ENCODE measurements at regions of chr15 and their contacts with region 1.

Region 1: DNA sequence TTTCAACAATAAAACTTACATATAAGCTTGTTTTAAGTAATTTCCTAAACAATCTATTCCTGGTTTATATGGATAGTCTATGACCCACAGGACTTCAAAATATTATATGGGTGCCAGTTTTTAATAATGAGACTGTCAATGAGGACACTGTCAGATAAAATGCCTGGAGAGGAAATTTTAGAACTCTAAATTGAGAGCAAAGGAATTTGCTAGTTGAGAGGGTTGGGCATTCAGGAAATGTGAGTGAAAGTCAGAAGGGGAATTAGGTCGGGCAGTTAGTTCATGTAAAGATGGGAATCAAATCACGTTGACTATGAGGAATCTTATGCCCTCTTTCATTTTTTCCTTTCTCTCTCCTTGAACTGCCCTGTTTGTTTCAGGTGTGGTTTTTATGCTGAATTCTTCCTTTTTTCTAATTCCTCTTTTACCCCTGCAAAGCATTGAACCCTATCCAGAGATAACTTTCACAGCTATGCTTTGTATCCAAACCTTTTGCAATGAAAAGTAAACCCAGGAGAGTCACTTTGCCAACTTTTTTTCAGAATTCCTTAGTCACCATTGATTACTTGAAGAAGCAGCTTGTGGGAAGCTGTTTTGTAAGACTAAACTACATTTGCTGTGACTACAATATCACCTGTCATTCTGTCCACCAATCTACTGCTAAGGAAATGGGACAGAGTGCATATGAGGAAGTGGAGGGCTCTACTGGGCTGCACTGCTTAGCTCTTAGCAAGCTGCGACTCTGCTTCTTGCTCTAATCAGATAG is 27.8 kb downstream of the CHP1 start:
- DNase-seq: no peak
- ATAC-seq: no peak
- H3K4me3 Mint-ChIP-seq: no peak overlapping the region
- H3K27ac Mint-ChIP-seq: no peak overlapping the region
- H3K4me1 Mint-ChIP-seq: no peaks in the 10 kb centered on the region
- H3K27me3 Mint-ChIP-seq: no peaks in the 10 kb centered on the region

Region 2: DNA sequence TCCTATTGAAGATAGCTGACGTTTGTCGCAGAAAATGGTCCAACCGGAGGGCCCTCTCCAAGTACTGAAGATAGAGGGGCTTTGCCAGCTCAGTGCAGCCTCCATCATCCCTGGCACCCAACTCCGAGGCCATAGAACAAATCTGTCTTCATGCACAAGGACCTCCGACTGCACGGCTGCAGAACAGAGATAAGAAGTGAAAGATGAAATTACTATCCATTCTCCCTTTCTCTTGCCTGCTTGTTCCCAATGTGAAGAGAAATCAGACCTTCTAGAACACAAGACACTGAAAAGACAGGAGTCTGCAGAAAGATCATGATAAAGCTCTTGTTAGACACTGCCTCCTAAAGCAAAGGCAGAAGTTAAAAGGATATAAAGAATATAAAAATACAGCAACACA is 162.7 kb before region 1 on chr15:
- CTCF ChIA-PET with region 1: no interaction called
- POLR2A ChIA-PET with region 1: no interaction called
- intact Hi-C with region 1: no loop called
- DNase-seq: no peak
- ATAC-seq: no peak
- H3K4me3 Mint-ChIP-seq: no peak overlapping the region
- H3K27ac Mint-ChIP-seq: no peak overlapping the region
- H3K4me1 Mint-ChIP-seq: peaks cover 5% of the 10 kb centered on the region
- H3K27me3 Mint-ChIP-seq: no peaks in the 10 kb centered on the region

Region 3: DNA sequence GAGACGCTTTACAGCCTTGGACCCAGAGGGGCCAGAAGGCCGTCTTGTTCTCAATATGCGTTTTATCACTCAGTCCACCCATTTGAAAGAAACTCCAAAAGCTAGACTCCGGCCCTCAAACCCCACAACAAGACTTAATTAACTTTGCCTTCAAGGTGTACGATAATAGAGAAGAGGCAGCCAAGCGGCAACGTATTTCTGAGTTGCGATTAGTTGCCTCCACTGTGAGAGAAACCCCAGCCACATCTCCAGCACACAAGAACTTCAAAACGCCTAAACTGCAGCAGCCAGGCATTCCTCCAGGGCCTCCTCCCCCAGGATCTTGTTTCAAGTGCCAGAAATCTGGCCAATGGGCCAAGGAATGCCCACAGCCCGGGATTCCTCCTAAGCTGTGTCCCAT is 125.4 kb before region 1 on chr15:
- CTCF ChIA-PET with region 1: no interaction called
- POLR2A ChIA-PET with region 1: no interaction called
- intact Hi-C with region 1: no loop called
- DNase-seq: no peak
- ATAC-seq: no peak
- H3K4me3 Mint-ChIP-seq: no peak overlapping the region
- H3K27ac Mint-ChIP-seq: no peak overlapping the region
- H3K4me1 Mint-ChIP-seq: no peaks in the 10 kb centered on the region
- H3K27me3 Mint-ChIP-seq: peaks cover 4% of the 10 kb centered on the region

Region 4: DNA sequence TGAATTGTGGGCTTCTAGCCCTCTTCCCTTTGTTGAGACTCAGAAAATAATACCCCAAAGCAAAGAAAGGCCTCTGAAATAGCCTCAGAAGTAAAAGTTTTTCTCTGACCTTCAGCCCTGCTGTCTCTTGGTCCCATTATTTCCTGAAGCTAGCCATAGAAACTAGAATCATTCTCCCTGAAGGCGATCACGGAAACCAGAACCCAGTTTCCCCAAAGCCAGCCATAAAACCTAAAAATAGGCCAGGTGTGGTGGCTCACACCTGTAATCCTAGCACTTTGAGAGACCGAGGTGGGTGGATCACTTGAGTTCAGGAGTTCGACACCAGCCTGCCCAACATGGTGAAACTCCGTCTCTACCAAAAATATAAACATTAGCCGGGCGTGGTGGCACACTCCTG is 55.5 kb before region 1 on chr15:
- CTCF ChIA-PET with region 1: no interaction called
- POLR2A ChIA-PET with region 1: no interaction called
- intact Hi-C with region 1: loop called in 1 of 2 experiments (anchors 5 kb)
- DNase-seq: no peak
- ATAC-seq: no peak
- H3K4me3 Mint-ChIP-seq: no peak overlapping the region
- H3K27ac Mint-ChIP-seq: no peak overlapping the region
- H3K4me1 Mint-ChIP-seq: no peaks in the 10 kb centered on the region
- H3K27me3 Mint-ChIP-seq: peaks cover 1% of the 10 kb centered on the region

Region 5: DNA sequence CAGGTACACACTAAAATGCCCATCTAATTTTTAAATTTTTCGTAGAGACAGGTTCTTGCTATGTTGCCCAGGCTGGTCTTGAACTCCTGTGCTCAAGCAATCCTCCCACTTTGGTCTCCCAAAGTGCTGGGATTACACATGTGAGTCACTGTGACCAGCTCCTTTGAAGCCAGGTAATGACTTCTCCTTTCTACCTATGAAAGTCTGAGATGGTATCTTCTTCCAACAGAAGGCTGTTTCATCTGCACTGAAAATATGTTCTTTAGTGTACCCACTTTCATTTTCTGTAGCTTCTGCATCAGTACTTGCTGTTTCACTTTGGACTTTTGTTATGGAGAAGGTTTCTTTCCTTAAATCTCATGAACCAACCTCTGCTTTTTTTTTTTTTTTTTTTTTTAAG is 64.7 kb after region 1 on chr15:
- CTCF ChIA-PET with region 1: no interaction called
- POLR2A ChIA-PET with region 1: no interaction called
- intact Hi-C with region 1: no loop called
- DNase-seq: peak; percentile 36
- ATAC-seq: peak; percentile 96
- H3K4me3 Mint-ChIP-seq: no peak overlapping the region
- H3K27ac Mint-ChIP-seq: no peak overlapping the region
- H3K4me1 Mint-ChIP-seq: peaks cover 17% of the 10 kb centered on the region
- H3K27me3 Mint-ChIP-seq: no peaks in the 10 kb centered on the region